Dorsolateral prefrontal cortex (tissue), 120 donors: ENCODE measurements at regions of chr7 and their contacts with region 1.

Region 1: DNA sequence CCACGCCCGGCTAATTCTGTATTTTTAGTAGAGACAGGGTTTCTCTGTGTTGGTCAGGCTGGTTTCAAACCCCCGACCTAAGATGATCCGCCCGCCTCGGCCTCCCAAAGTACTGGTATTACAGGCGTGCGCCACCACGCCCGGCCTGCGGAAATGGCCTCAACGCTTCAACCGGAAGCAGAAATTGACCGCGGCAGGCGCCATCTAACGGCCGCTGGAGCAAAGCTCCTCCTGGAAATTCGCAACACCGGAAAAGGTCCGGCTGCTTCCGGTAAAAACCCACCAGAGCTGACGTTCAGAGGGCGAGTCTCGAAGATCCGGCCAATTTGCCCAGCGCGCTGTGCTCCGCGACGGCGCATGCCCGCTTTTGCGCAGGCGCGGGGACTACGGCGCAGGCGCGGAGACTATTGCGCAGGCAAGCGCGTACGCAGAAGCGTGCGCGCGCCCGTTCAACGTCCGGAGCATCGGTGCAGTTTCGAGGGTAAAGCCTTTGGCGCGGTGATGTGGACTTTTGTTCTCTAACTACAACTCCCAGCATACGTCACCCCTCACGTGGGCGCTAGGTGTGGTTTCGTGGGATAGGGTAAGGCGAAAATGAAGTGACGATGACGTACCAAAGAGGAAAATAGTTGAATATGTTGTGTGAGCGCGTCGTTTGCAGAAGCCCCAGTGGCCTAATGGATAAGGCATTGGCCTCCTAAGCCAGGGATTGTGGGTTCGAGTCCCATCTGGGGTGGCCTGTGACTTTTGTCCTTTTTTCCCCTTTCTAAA is 915 bp upstream of the FMC1 start:
- DNase-seq: peak; percentile 94 to 99 (median 98)
- H3K4me3 ChIP-seq: peak overlapping the region; percentile 49 to 99 (median 91)
- H3K27ac ChIP-seq: peak overlapping the region; percentile 98 to 100 (median 100)
- H3K27me3 ChIP-seq: no peaks in the 10 kb centered on the region
- CTCF ChIP-seq: peak; percentile 58 to 91 (median 80)

Region 2: GRCh38 chr7:139230774-139231512 is 109.3 kb before region 1 on chr7 and contains the start of gene UBN2:
- intact Hi-C with region 1: loop called in 1 of 2 experiments (anchors 5 kb)
- DNase-seq: peak; percentile 95 to 99 (median 98)
- H3K4me3 ChIP-seq: peak within 1 kb of the TSS; percentile 75 to 99 (median 95)
- H3K27ac ChIP-seq: peak within 1 kb of the TSS; percentile 79 to 100 (median 96)
- H3K27me3 ChIP-seq: no peaks in the 10 kb centered on the region
- CTCF ChIP-seq: peak in 22 of 56 donors; percentile 6 to 57 (median 30)
- total RNA-seq, gene UBN2: 40.4 to 73.9 (median 54.8) TPM

Region 3: GRCh38 chr7:139297795-139298194 is 42.4 kb before region 1 on chr7:
- intact Hi-C with region 1: no loop called
- DNase-seq: no peak
- H3K4me3 ChIP-seq: no peak overlapping the region
- H3K27ac ChIP-seq: no peak overlapping the region
- H3K27me3 ChIP-seq: no peaks in the 10 kb centered on the region
- CTCF ChIP-seq: no peak

Region 4: DNA sequence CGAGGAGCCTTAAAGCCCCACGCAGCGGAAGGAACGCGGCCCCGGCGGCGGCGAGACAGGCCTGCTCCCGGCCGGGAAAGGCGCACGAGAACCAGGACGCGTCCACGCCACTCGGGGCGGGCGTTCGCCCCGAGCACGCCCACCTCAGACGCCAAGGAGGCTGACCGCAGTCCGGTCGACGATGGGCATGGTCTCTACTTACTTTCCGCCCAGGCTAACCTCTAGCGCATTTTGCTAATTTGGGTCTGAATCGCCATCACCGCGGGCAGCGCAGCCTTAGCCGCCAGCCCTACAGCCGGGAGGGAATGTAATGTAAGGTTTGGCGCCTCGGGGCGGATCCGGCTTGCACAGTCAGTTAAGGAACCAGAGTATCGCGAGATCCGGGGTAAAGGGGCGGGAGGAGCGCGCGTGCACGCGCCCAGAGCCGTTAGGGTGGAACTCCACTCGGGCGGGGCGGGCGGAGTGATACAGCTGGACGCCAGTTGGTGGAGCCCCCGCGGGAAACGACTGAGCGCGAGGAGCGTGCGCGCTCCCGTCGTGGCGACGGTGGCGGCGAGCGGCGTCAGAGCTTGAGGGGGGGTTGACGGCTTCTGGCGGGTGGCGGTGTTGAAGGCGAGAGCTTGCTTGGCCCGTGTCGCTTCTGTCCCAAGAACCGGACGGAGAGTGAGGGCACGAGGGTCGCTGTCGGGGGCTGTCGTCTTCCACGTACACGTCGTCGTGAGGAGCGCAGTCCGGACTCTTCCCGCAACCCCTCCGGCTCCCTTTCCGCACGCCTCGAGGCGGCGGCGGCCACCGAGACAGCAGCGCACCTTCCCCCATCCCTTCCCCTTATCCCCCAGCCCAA is 19.4 kb after region 1 on chr7 and contains the start of gene LUC7L2:
- intact Hi-C with region 1: loop called (anchors 1 kb)
- DNase-seq: peak; percentile 99 to 100 (median 100)
- H3K4me3 ChIP-seq: peak within 1 kb of the TSS; percentile 73 to 99 (median 93)
- H3K27ac ChIP-seq: peak within 1 kb of the TSS; percentile 96 to 100 (median 100)
- H3K27me3 ChIP-seq: no peaks in the 10 kb centered on the region
- CTCF ChIP-seq: peak in 45 of 56 donors; percentile 7 to 58 (median 34)
- total RNA-seq, gene LUC7L2: 87.7 to 161 (median 115) TPM

Region 5: GRCh38 chr7:139431010-139431409 is 90.8 kb after region 1 on chr7:
- intact Hi-C with region 1: loop called (anchors 2 to 5 kb)
- DNase-seq: no peak
- H3K4me3 ChIP-seq: no peak overlapping the region
- H3K27ac ChIP-seq: peak overlapping the region in 58 of 59 donors; percentile 31 to 93 (median 82)
- H3K27me3 ChIP-seq: no peaks in the 10 kb centered on the region
- CTCF ChIP-seq: no peak

Region 6: GRCh38 chr7:139494835-139495579 is 154.8 kb after region 1 on chr7:
- intact Hi-C with region 1: loop called in 1 of 2 experiments (anchors 5 kb)
- DNase-seq: no peak
- H3K4me3 ChIP-seq: no peak overlapping the region
- H3K27ac ChIP-seq: no peak overlapping the region
- H3K27me3 ChIP-seq: peaks cover 0 to 3% (median 0%) of the 10 kb centered on the region in 45 donors
- CTCF ChIP-seq: no peak

Region 7: GRCh38 chr7:139570119-139570518 is 229.9 kb after region 1 on chr7:
- intact Hi-C with region 1: loop called in 1 of 2 experiments (anchors 5 kb)
- DNase-seq: peak in 9 of 10 donors; percentile 65 to 89 (median 73)
- H3K4me3 ChIP-seq: no peak overlapping the region
- H3K27ac ChIP-seq: peak overlapping the region in 43 of 59 donors; percentile 2 to 79 (median 56)
- H3K27me3 ChIP-seq: no peaks in the 10 kb centered on the region
- CTCF ChIP-seq: peak in 53 of 56 donors; percentile 9 to 76 (median 54)

Region 8: GRCh38 chr7:139995017-139995931 is 655.1 kb after region 1 on chr7:
- intact Hi-C with region 1: loop called in 1 of 2 experiments (anchors 10 kb)
- DNase-seq: peak; percentile 15 to 90 (median 84)
- H3K4me3 ChIP-seq: no peak overlapping the region
- H3K27ac ChIP-seq: peak overlapping the region in 58 of 59 donors; percentile 67 to 97 (median 92)
- H3K27me3 ChIP-seq: no peaks in the 10 kb centered on the region
- CTCF ChIP-seq: peak in 22 of 56 donors; percentile 9 to 50 (median 20)